Heart left ventricle (tissue), 16 donors: ENCODE measurements at regions of chr14 and their contacts with region 1.

Region 1: GRCh38 chr14:48751293-48751692 is 834.9 kb downstream of the RPS29 start:
- DNase-seq: no peak
- ATAC-seq: peak in 2 of 4 donors; percentile 34 to 54
- H3K4me3 ChIP-seq: no peak overlapping the region
- H3K27ac ChIP-seq: no peak overlapping the region
- H3K4me1 ChIP-seq: peaks cover 0 to 16% (median 5%) of the 10 kb centered on the region in 12 donors
- H3K27me3 ChIP-seq: no peaks in the 10 kb centered on the region
- CTCF ChIP-seq: no peak
- POLR2A ChIP-seq: no peak

Region 2: DNA sequence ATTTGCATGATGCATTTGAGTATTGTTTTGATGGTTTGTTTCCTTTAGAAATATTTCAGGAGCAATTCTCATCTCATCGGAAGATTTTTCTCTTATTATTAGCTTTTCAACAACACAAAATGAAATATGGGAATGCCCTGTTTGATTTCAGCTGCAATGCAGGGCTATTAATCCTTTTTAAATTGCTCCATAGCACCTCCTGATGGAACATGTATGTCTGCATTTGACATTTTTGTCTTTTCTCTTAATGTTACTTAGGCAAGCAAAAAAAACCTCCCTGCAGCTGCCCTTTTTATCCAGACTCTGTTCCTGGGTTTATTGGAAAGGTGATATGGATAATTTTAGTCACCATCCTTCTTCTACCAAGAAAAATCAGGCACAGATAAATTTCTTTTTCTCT is 60.9 kb before region 1 on chr14:
- intact Hi-C with region 1: loop called in 1 of 10 experiments (anchors 5 kb)
- DNase-seq: no peak
- ATAC-seq: no peak
- H3K4me3 ChIP-seq: no peak overlapping the region
- H3K27ac ChIP-seq: no peak overlapping the region
- H3K4me1 ChIP-seq: no peaks in the 10 kb centered on the region
- H3K27me3 ChIP-seq: no peaks in the 10 kb centered on the region
- CTCF ChIP-seq: no peak
- POLR2A ChIP-seq: no peak